Spleen (tissue), 13 donors: ENCODE measurements at regions of chr1 and their contacts with region 1.

Region 1: GRCh38 chr1:169595764-169596711 is 9.8 kb upstream of the F5 start:
- DNase-seq: no peak
- H3K4me3 ChIP-seq: no peak overlapping the region
- H3K27ac ChIP-seq: no peak overlapping the region
- H3K4me1 ChIP-seq: peaks cover 0 to 2% (median 2%) of the 10 kb centered on the region in 6 donors
- H3K27me3 ChIP-seq: no peaks in the 10 kb centered on the region
- CTCF ChIP-seq: no peak
- POLR2A ChIP-seq: no peak

Region 2: GRCh38 chr1:169711469-169712281 is 115.6 kb after region 1 on chr1 and contains the start of gene SELL:
- intact Hi-C with region 1: loop called (anchors 5 kb)
- DNase-seq: no peak
- H3K4me3 ChIP-seq: peak within 1 kb of the TSS; percentile 18 to 68 (median 44)
- H3K27ac ChIP-seq: peak within 1 kb of the TSS; percentile 38 to 92 (median 82)
- H3K4me1 ChIP-seq: peaks cover 0 to 55% (median 16%) of the 10 kb centered on the region in 6 donors
- H3K27me3 ChIP-seq: no peaks in the 10 kb centered on the region
- CTCF ChIP-seq: peak; percentile 62 to 84 (median 74)
- POLR2A ChIP-seq: peak in 2 of 3 donors; percentile 79 to 89
- total RNA-seq, gene SELL: 128 to 409 (median 176) TPM